Mucosa of descending colon (tissue), 3 donors: ENCODE measurements at regions of chr12 and their contacts with region 1.

Region 1: GRCh38 chr12:15856097-15856982 is 25.8 kb upstream of the STRAP start:
- DNase-seq: peak in 1 of 3 donors; percentile 89
- ATAC-seq: peak; percentile 67
- H3K4me3 ChIP-seq: no peak overlapping the region
- H3K4me1 ChIP-seq: peaks cover 10% of the 10 kb centered on the region
- CTCF ChIP-seq: peak; percentile 38

Region 2: GRCh38 chr12:15151161-15152120 is 704.9 kb before region 1 on chr12:
- intact Hi-C with region 1: no loop called
- DNase-seq: peak in 1 of 3 donors; percentile 49
- ATAC-seq: peak; percentile 47
- H3K4me3 ChIP-seq: no peak overlapping the region
- H3K4me1 ChIP-seq: no peaks in the 10 kb centered on the region
- CTCF ChIP-seq: no peak

Region 3: GRCh38 chr12:15494329-15495046 is 361.9 kb before region 1 on chr12:
- intact Hi-C with region 1: no loop called
- DNase-seq: no peak
- ATAC-seq: no peak
- H3K4me3 ChIP-seq: no peak overlapping the region
- H3K4me1 ChIP-seq: no peaks in the 10 kb centered on the region
- CTCF ChIP-seq: no peak

Region 4: GRCh38 chr12:15584366-15585041 is 271.8 kb before region 1 on chr12:
- intact Hi-C with region 1: loop called in 1 of 2 experiments (anchors 5 kb)
- DNase-seq: peak in 1 of 3 donors; percentile 67
- ATAC-seq: peak; percentile 43
- H3K4me3 ChIP-seq: no peak overlapping the region
- H3K4me1 ChIP-seq: no peaks in the 10 kb centered on the region
- CTCF ChIP-seq: peak; percentile 19

Region 5: DNA sequence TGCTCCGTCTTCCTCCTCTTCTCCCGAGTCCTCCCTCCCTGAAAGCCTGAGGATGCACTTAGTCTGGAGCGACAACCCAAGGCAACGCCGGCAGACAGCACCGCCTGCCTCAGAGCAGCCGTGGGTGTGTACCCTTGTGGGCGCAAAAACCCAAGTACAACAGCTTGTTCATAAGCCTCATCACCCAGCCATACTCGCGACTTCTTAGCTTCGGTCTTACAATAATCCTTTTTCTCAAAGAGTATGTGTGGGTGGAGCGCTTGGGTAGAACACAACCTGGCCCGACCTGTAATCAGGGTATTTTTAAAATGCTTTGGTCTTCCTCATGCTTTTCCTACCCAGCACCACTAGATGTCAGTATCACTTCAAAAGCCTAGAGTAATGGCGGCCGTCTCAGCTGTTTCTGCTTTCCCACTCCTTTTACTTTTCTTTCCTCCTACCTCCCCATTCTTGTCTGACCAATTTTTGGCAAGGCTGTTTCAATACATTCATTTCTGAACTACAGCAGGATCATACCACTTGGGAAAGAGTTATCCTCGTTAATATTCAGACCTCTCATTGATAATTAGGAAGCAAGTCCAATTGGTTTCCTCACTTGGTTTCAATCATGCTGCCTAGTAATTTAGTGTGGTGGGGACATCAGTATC is 266.0 kb before region 1 on chr12:
- intact Hi-C with region 1: loop called (anchors 1 to 5 kb)
- DNase-seq: peak in 2 of 3 donors; percentile 59 to 71
- ATAC-seq: peak; percentile 96
- H3K4me3 ChIP-seq: no peak overlapping the region
- H3K4me1 ChIP-seq: peaks cover 5% of the 10 kb centered on the region
- CTCF ChIP-seq: peak; percentile 68

Region 6: DNA sequence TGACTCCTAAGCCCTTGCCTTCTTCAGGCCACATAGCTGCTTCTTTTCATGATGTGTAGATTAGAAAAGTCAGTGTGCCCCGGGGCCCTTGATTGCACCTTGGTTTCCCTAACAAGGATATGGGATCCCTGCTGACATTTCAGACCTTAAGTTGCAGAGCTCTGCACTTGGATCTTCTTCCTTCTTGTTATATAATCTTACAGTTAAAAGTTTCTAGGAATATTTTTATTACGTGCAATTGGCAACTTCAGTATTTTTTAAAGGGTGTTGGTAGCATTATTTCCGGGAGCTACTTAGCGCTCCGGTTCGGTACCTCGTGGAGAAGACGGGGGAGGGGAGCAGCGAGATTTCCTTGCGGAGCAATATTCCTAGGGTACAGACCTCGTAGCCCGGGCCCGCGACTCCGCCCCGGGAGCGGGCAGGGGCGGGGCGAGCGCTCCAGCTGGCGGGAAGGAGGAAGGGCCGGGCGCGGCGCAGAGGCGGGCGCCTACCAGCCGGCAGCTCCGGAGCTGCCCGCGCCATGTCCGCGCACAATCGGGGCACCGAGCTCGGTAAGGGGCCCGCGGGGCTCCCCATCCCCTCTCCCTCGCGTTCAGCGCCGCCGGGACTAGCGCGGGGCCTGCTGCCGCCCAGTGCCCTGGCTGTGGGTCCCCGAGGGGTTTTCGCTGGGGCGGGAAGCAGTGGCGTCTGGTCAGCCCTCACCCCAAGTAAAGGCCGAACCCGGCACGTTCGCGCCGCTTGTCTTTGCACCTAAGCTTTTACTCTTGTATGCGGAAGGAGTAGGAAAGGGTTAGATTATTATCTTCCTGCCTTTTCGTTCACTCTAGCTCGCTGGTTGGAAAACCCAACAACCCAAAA is 54.8 kb after region 1 on chr12 and contains the start of gene DERA:
- intact Hi-C with region 1: no loop called
- DNase-seq: peak; percentile 91 to 95 (median 91)
- ATAC-seq: peak; percentile 99
- H3K4me3 ChIP-seq: peak within 1 kb of the TSS; percentile 38
- H3K4me1 ChIP-seq: peaks cover 5% of the 10 kb centered on the region
- CTCF ChIP-seq: no peak
- total RNA-seq, gene DERA: 53.1 to 77.3 (median 74.3) TPM